Sigmoid colon (tissue), 7 donors: ENCODE measurements at regions of chr2 and their contacts with region 1.

Region 1: DNA sequence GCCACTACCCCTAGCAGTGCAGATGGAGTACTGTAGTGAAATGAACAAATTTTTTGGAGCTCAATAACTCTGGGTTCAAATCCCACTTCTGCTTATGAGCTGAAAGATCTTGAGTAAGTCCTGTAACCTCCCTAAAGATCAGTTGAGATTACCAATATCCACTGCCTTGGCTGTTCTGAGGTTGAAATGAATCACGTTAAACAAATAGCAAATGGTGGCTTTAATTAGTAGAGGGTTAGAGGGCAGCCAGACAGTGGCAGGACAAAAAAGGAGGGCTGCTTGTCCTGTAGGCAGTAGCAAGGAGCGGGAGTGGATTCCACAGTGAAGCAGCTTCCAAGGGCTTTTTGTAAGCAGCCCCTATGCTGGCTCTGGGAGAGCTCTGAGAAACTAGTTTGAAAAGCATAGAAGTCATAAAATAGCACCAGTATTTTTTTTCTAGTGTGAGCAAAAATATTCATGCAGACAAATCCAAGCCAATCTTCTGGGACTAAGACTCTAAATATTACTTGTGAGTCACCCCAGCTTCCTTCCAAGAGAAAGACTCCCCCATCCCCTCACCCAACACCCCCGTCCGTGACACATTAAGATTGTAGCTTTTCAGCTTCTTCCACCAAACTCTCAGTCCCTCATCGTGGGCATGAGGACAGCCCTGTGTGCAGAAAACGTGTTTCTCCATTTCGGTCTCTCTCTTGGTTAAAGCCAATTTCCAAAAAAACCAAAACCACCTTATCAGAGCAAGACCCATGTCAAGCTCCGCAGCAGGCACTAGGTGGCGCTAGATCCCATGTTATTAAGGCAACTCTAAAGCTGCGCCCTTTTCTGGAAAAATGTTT is 123.5 kb upstream of the LGALSL start:
- DNase-seq: peak; percentile 91
- H3K4me3 ChIP-seq: peak overlapping the region in 2 of 4 donors; percentile 29 to 37
- H3K27ac ChIP-seq: peak overlapping the region; percentile 60 to 79 (median 62)
- H3K4me1 ChIP-seq: peaks cover 0 to 32% (median 20%) of the 10 kb centered on the region in 4 donors
- H3K27me3 ChIP-seq: no peaks in the 10 kb centered on the region
- CTCF ChIP-seq: peak; percentile 87 to 91 (median 90)
- EP300 ChIP-seq: no peak
- POLR2A ChIP-seq: no peak

Region 2: GRCh38 chr2:64144057-64145013 is 186.2 kb before region 1 on chr2 and contains the start of gene PELI1:
- intact Hi-C with region 1: loop called (anchors 5 kb)
- DNase-seq: peak; percentile 98
- H3K4me3 ChIP-seq: peak within 1 kb of the TSS; percentile 78 to 99 (median 92)
- H3K27ac ChIP-seq: peak within 1 kb of the TSS; percentile 97 to 99 (median 98)
- H3K4me1 ChIP-seq: peaks cover 0 to 30% (median 26%) of the 10 kb centered on the region in 4 donors
- H3K27me3 ChIP-seq: no peaks in the 10 kb centered on the region
- CTCF ChIP-seq: peak in 1 of 4 experiments; percentile 7
- EP300 ChIP-seq: peak in 1 of 4 donors; percentile 13
- POLR2A ChIP-seq: peak; percentile 96 to 97
- total RNA-seq, gene PELI1: 22.0 to 30.8 (median 24.9) TPM

Region 3: GRCh38 chr2:64273524-64274398 is 56.7 kb before region 1 on chr2:
- intact Hi-C with region 1: no loop called
- DNase-seq: peak; percentile 83
- H3K4me3 ChIP-seq: peak overlapping the region in 2 of 4 donors; percentile 5 to 18
- H3K27ac ChIP-seq: peak overlapping the region; percentile 66 to 82 (median 75)
- H3K4me1 ChIP-seq: peaks cover 0 to 36% (median 27%) of the 10 kb centered on the region in 4 donors
- H3K27me3 ChIP-seq: no peaks in the 10 kb centered on the region
- CTCF ChIP-seq: no peak
- EP300 ChIP-seq: no peak
- POLR2A ChIP-seq: no peak

Region 4: GRCh38 chr2:64356906-64357305 is 26.4 kb after region 1 on chr2:
- intact Hi-C with region 1: loop called (anchors 1 kb)
- DNase-seq: no peak
- H3K4me3 ChIP-seq: no peak overlapping the region
- H3K27ac ChIP-seq: no peak overlapping the region
- H3K4me1 ChIP-seq: peaks cover 0 to 12% (median 10%) of the 10 kb centered on the region in 4 donors
- H3K27me3 ChIP-seq: no peaks in the 10 kb centered on the region
- CTCF ChIP-seq: no peak
- EP300 ChIP-seq: no peak
- POLR2A ChIP-seq: no peak

Region 5: GRCh38 chr2:64426183-64426952 is 95.9 kb after region 1 on chr2:
- intact Hi-C with region 1: no loop called
- DNase-seq: no peak
- H3K4me3 ChIP-seq: no peak overlapping the region
- H3K27ac ChIP-seq: no peak overlapping the region
- H3K4me1 ChIP-seq: no peaks in the 10 kb centered on the region
- H3K27me3 ChIP-seq: no peaks in the 10 kb centered on the region
- CTCF ChIP-seq: no peak
- EP300 ChIP-seq: no peak
- POLR2A ChIP-seq: no peak

Region 6: GRCh38 chr2:64488050-64488974 is 157.8 kb after region 1 on chr2:
- intact Hi-C with region 1: loop called (anchors 1 kb)
- DNase-seq: peak; percentile 76
- H3K4me3 ChIP-seq: no peak overlapping the region
- H3K27ac ChIP-seq: no peak overlapping the region
- H3K4me1 ChIP-seq: peaks cover 0 to 21% (median 14%) of the 10 kb centered on the region in 4 donors
- H3K27me3 ChIP-seq: no peaks in the 10 kb centered on the region
- CTCF ChIP-seq: peak; percentile 71 to 94 (median 94)
- EP300 ChIP-seq: no peak
- POLR2A ChIP-seq: no peak

Region 7: GRCh38 chr2:64504774-64505720 is 174.6 kb after region 1 on chr2:
- intact Hi-C with region 1: no loop called
- DNase-seq: no peak
- H3K4me3 ChIP-seq: no peak overlapping the region
- H3K27ac ChIP-seq: no peak overlapping the region
- H3K4me1 ChIP-seq: no peaks in the 10 kb centered on the region
- H3K27me3 ChIP-seq: no peaks in the 10 kb centered on the region
- CTCF ChIP-seq: no peak
- EP300 ChIP-seq: no peak
- POLR2A ChIP-seq: no peak

Region 8: GRCh38 chr2:64873472-64873924 is 543.0 kb after region 1 on chr2:
- intact Hi-C with region 1: loop called (anchors 5 kb)
- DNase-seq: peak; percentile 86
- H3K4me3 ChIP-seq: peak overlapping the region in 3 of 4 donors; percentile 6 to 34 (median 27)
- H3K27ac ChIP-seq: no peak overlapping the region
- H3K4me1 ChIP-seq: peaks cover 0 to 18% (median 6%) of the 10 kb centered on the region in 4 donors
- H3K27me3 ChIP-seq: no peaks in the 10 kb centered on the region
- CTCF ChIP-seq: peak; percentile 83 to 97 (median 94)
- EP300 ChIP-seq: no peak
- POLR2A ChIP-seq: no peak